ENCODE measurements at regions of chr6 and their contacts with region 1.

Region 1: DNA sequence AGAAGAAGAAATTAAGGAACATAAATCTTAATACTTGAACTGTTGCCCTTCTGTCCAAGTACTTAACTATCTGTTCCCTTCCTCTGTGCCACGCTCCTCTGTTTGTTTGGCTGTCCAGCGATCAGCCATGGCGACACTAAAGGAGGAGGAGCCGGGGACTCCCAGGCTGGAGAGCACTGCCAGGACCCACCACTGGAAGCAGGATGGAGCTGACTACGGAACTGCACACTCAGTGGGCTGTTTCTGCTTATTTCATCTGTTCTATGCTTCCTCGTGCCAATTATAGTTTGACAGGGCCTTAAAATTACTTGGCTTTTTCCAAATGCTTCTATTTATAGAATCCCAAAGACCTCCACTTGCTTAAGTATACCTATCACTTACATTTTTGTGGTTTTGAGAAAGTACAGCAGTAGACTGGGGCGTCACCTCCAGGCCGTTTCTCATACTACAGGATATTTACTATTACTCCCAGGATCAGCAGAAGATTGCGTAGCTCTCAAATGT is 17.1 kb downstream of the IRF4 start:
- DNase-seq: peak in 6 of 7 donors; percentile 41 to 66 (median 51)
- H3K4me3 ChIP-seq: no peak overlapping the region
- H3K27ac ChIP-seq: no peak overlapping the region
- H3K4me1 ChIP-seq: no peaks in the 10 kb centered on the region
- H3K27me3 ChIP-seq: no peaks in the 10 kb centered on the region
- CTCF ChIP-seq: peak in 5 of 6 experiments; percentile 15 to 75 (median 50)
- POLR2A ChIP-seq: no peak

Region 2: GRCh38 chr6:188821-189655 is 219.6 kb before region 1 on chr6:
- intact Hi-C with region 1: loop called in 1 of 2 experiments (anchors 5 kb)
- DNase-seq: peak; percentile 79 to 92 (median 83)
- H3K4me3 ChIP-seq: no peak overlapping the region
- H3K27ac ChIP-seq: no peak overlapping the region
- H3K4me1 ChIP-seq: no peaks in the 10 kb centered on the region
- H3K27me3 ChIP-seq: no peaks in the 10 kb centered on the region
- CTCF ChIP-seq: peak; percentile 68 to 93 (median 79)
- POLR2A ChIP-seq: no peak

Measured in adrenal gland (tissue), 19 donors.